Naive thymus-derived CD4-positive, alpha-beta T cell (primary cell): ENCODE measurements at regions of chr13 and their contacts with region 1.

Region 1: GRCh38 chr13:114226699-114227323 is 7.9 kb upstream of the CDC16 start:
- DNase-seq: peak; percentile 67 to 82 (median 73)
- ATAC-seq: peak; percentile 92
- H3K4me3 ChIP-seq: no peak overlapping the region
- H3K4me3 Mint-ChIP-seq: peak overlapping the region; percentile 35 to 74 (median 54)
- H3K27ac ChIP-seq: peak overlapping the region; percentile 47
- H3K27ac Mint-ChIP-seq: peak overlapping the region in 8 of 9 donors; percentile 84 to 95 (median 91)
- H3K4me1 ChIP-seq: peaks cover 17 to 40% of the 10 kb centered on the region in 2 donors
- H3K4me1 Mint-ChIP-seq: peaks cover 37 to 50% (median 43%) of the 10 kb centered on the region in 7 donors
- H3K27me3 ChIP-seq: no peaks in the 10 kb centered on the region
- H3K27me3 Mint-ChIP-seq: peaks cover 0 to 34% (median 4%) of the 10 kb centered on the region in 5 donors

Region 2: GRCh38 chr13:113832204-113832603 is 394.6 kb before region 1 on chr13:
- CTCF ChIA-PET with region 1: no interaction called
- POLR2A ChIA-PET with region 1: no interaction called
- intact Hi-C with region 1: no loop called
- DNase-seq: no peak
- ATAC-seq: no peak
- H3K4me3 ChIP-seq: no peak overlapping the region
- H3K4me3 Mint-ChIP-seq: no peak overlapping the region
- H3K27ac ChIP-seq: no peak overlapping the region
- H3K27ac Mint-ChIP-seq: no peak overlapping the region
- H3K4me1 ChIP-seq: no peaks in the 10 kb centered on the region
- H3K4me1 Mint-ChIP-seq: peaks cover 0 to 7% (median 0%) of the 10 kb centered on the region in 7 donors
- H3K27me3 ChIP-seq: no peaks in the 10 kb centered on the region
- H3K27me3 Mint-ChIP-seq: no peaks in the 10 kb centered on the region

Region 3: GRCh38 chr13:114047358-114047881 is 179.4 kb before region 1 on chr13:
- CTCF ChIA-PET with region 1: interaction called, 3 read pairs
- POLR2A ChIA-PET with region 1: no interaction called
- intact Hi-C with region 1: loop called in 1 of 2 experiments (anchors 5 kb)
- DNase-seq: no peak
- ATAC-seq: no peak
- H3K4me3 ChIP-seq: no peak overlapping the region
- H3K4me3 Mint-ChIP-seq: peak overlapping the region in 6 of 10 donors; percentile 12 to 75 (median 36)
- H3K27ac ChIP-seq: peak overlapping the region; percentile 10
- H3K27ac Mint-ChIP-seq: peak overlapping the region; percentile 18 to 95 (median 55)
- H3K4me1 ChIP-seq: peaks cover 22 to 34% of the 10 kb centered on the region in 2 donors
- H3K4me1 Mint-ChIP-seq: peaks cover 52 to 79% (median 69%) of the 10 kb centered on the region in 7 donors
- H3K27me3 ChIP-seq: no peaks in the 10 kb centered on the region
- H3K27me3 Mint-ChIP-seq: no peaks in the 10 kb centered on the region

Region 4: DNA sequence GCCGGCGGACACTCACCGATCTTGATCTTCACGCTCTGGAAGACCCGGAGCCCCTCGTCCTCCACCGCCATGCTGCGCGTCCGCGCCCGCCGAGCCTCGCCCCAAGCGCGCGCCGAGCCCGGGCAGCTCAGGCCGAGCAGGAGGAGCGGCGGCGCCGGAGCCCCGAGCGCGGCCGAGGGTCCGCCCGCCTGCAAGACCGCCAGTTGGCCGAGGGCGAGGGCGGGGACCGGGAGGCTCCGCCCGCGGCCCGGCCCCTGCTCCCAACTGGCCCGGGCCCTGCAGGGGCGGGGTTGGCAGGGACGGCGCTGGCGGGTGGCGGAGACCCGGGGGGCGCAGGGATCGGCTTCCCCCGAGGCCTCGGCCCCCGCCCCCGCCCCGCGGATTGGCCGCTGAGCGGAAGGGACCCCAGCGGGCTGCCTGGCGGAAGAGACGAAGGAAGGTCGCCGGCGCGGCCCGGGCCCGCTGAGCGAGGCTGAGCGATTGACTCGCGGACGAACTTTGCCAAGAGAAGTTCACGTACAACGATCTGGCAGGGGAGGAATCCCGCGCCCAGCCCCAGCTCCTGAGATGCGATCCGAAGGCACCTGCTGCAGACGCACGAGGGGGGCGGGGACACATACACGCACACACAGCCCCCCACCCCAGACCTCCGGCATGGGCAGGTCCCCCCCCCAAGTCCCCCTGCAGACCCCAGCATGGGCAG is 94.2 kb before region 1 on chr13 and contains the start of gene RASA3:
- CTCF ChIA-PET with region 1: interaction called, 8 read pairs
- POLR2A ChIA-PET with region 1: interaction called, 23 read pairs
- intact Hi-C with region 1: loop called (anchors 1 kb)
- DNase-seq: peak in 8 of 9 donors; percentile 52 to 75 (median 58)
- ATAC-seq: peak; percentile 69
- H3K4me3 ChIP-seq: peak within 1 kb of the TSS; percentile 90
- H3K4me3 Mint-ChIP-seq: peak within 1 kb of the TSS; percentile 96 to 100 (median 100)
- H3K27ac ChIP-seq: peak within 1 kb of the TSS; percentile 85
- H3K27ac Mint-ChIP-seq: peak within 1 kb of the TSS; percentile 82 to 100 (median 99)
- H3K4me1 ChIP-seq: peaks cover 32 to 49% of the 10 kb centered on the region in 2 donors
- H3K4me1 Mint-ChIP-seq: peaks cover 36 to 74% (median 56%) of the 10 kb centered on the region in 7 donors
- H3K27me3 ChIP-seq: no peaks in the 10 kb centered on the region
- H3K27me3 Mint-ChIP-seq: peaks cover 0 to 4% (median 0%) of the 10 kb centered on the region in 5 donors
- total RNA-seq, gene RASA3: 110 to 227 (median 199) TPM

Region 5: DNA sequence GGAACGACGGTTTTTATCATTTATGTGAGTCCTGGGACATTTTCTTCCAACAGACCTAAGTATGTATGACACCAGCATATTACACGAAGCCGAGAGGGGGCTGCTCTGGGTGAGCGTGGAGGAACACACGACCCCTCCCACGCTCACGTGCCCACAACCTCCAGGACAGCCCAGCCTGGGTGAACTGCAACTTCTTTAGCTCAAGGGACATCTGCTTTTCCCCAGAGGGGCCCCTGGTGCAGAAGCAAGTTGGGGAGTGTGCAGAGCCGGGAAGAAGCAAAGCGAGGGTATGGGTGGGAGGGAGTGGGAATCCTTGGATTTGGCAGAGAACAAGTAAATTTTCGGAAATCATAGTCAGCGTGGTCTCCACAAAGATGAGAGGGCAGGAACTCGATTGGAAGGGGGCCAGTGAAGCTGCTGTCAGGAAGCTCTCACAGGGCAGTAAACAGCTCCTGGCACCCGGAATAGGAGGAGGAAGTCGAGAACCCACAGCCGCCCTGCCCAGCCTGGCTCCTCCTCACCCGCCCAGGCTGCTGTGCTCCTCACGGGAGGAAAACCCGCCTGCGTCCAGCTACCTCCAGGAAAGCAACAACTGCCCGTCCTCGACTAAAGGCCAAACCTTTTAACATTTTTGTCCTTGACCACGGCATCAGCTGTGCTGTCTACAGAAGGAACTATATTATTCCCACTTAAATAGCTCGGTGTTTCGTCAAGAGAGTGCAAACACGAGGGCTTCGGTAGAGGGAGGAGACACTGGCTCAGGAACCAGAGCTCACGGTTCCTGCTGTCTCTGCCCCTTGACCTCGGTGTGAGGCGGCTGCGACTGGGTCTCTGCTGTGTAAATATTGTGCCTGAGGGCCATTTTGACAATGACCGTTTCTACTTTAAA is 64.9 kb before region 1 on chr13:
- CTCF ChIA-PET with region 1: interaction called, 7 read pairs
- POLR2A ChIA-PET with region 1: interaction called, 23 read pairs
- intact Hi-C with region 1: no loop called
- DNase-seq: peak in 5 of 9 donors; percentile 41 to 61 (median 59)
- ATAC-seq: peak; percentile 81
- H3K4me3 ChIP-seq: peak overlapping the region; percentile 45
- H3K4me3 Mint-ChIP-seq: peak overlapping the region; percentile 76 to 92 (median 84)
- H3K27ac ChIP-seq: peak overlapping the region; percentile 73
- H3K27ac Mint-ChIP-seq: peak overlapping the region; percentile 66 to 99 (median 96)
- H3K4me1 ChIP-seq: peaks cover 43 to 65% of the 10 kb centered on the region in 2 donors
- H3K4me1 Mint-ChIP-seq: peaks cover 59 to 95% (median 92%) of the 10 kb centered on the region in 7 donors
- H3K27me3 ChIP-seq: no peaks in the 10 kb centered on the region
- H3K27me3 Mint-ChIP-seq: peaks cover 0 to 36% (median 0%) of the 10 kb centered on the region in 5 donors

Region 6: DNA sequence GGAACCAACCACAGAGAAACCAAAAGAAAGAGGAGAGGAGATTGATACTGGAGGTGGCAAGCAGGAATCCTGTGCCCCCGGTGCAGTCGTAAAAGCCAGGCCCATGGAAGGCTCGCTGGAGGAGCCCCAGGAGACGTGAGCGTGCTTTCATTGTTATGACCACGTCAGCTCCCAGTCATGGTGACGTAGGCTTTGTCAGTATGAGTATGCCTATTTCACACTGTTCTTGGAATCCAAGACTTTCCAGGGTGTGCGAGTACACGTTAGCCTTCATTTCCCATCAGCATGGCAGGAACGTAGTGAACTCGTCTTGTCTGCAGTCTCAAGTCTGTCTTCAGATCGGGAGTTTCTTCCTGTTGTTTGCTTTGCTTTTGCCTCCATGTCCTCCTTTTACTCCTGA is 72.1 kb after region 1 on chr13:
- CTCF ChIA-PET with region 1: no interaction called
- POLR2A ChIA-PET with region 1: no interaction called
- intact Hi-C with region 1: no loop called
- DNase-seq: no peak
- ATAC-seq: no peak
- H3K4me3 ChIP-seq: no peak overlapping the region
- H3K4me3 Mint-ChIP-seq: no peak overlapping the region
- H3K27ac ChIP-seq: no peak overlapping the region
- H3K27ac Mint-ChIP-seq: no peak overlapping the region
- H3K4me1 ChIP-seq: no peaks in the 10 kb centered on the region
- H3K4me1 Mint-ChIP-seq: peaks cover 0 to 11% (median 3%) of the 10 kb centered on the region in 7 donors
- H3K27me3 ChIP-seq: no peaks in the 10 kb centered on the region
- H3K27me3 Mint-ChIP-seq: no peaks in the 10 kb centered on the region